ENCODE measurements at regions of chr17 and their contacts with region 1.

Region 1: GRCh38 chr17:51435641-51436091 is 175.3 kb downstream of the UTP18 start:
- DNase-seq: peak; percentile 90 to 91
- ATAC-seq: peak; percentile 96 to 99
- H3K4me3 ChIP-seq: no peak overlapping the region
- H3K27ac ChIP-seq: peak overlapping the region in 1 of 2 experiments; percentile 47; a peak in 3 of 6 replicates
- H3K4me1 ChIP-seq: peaks cover 23% of the 10 kb centered on the region
- CTCF ChIP-seq: peak; percentile 66
- EP300 ChIP-seq: no peak
- POLR2A ChIP-seq: no peak
- RAD21 ChIP-seq: peak; percentile 52 to 63

Region 2: GRCh38 chr17:51423421-51424154 is 12.1 kb before region 1 on chr17:
- CTCF ChIA-PET with region 1: interaction called, 17 read pairs
- POLR2A ChIA-PET with region 1: interaction called, 3 read pairs
- DNase-seq: peak; percentile 39 to 75
- ATAC-seq: peak; percentile 76
- H3K4me3 ChIP-seq: peak overlapping the region; percentile 22; the same call in 1 of the 3 replicates
- H3K27ac ChIP-seq: peak overlapping the region; percentile 68 to 77
- H3K4me1 ChIP-seq: peaks cover 27% of the 10 kb centered on the region
- CTCF ChIP-seq: no peak
- EP300 ChIP-seq: peak; percentile 45 to 68; a peak in 2 of 5 replicates
- POLR2A ChIP-seq: no peak
- RAD21 ChIP-seq: 0 out of 5 replicates have a peak, but pooled peaks of 1 of the 2 experiments have one; percentile 19

Region 3: DNA sequence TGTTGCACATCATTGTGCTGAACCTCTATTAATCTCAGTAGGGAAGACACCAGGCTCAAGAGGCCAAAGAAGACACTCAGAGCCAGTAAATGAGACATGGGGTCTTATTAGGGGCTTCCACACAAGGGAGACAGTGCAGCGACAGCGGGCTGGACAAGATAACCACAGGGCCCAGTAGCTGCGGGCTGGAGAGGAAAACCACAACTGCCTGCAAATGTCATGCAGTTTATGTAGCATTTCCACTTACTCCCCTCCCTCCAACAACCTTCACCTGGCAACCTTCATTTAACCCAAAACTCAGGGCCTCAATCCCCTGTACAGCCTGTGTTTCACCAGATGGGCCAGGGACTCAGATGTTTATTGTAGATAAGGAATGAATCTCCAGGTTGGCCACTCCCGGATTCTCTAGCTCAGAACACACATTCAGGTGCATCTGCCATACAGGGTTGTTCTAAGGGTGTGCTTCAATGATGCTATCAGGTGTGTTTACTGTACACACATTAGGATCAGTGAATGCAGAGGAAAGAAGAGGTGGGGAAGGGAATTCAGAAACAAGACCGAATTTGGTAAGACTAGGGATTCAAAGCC is 10.4 kb after region 1 on chr17:
- CTCF ChIA-PET with region 1: interaction called, 12 read pairs
- POLR2A ChIA-PET with region 1: no interaction called
- DNase-seq: no peak
- ATAC-seq: no peak
- H3K4me3 ChIP-seq: no peak overlapping the region
- H3K27ac ChIP-seq: no peak overlapping the region
- H3K4me1 ChIP-seq: no peaks in the 10 kb centered on the region
- CTCF ChIP-seq: no peak
- EP300 ChIP-seq: no peak
- POLR2A ChIP-seq: no peak
- RAD21 ChIP-seq: no peak

Region 4: GRCh38 chr17:51467336-51467735 is 31.7 kb after region 1 on chr17:
- CTCF ChIA-PET with region 1: interaction called, 32 read pairs
- POLR2A ChIA-PET with region 1: no interaction called
- DNase-seq: no peak
- ATAC-seq: no peak
- H3K4me3 ChIP-seq: no peak overlapping the region
- H3K27ac ChIP-seq: no peak overlapping the region
- H3K4me1 ChIP-seq: no peaks in the 10 kb centered on the region
- CTCF ChIP-seq: no peak
- EP300 ChIP-seq: no peak
- POLR2A ChIP-seq: no peak
- RAD21 ChIP-seq: no peak